ENCODE measurements at regions of chr9 and their contacts with region 1.

Region 1: DNA sequence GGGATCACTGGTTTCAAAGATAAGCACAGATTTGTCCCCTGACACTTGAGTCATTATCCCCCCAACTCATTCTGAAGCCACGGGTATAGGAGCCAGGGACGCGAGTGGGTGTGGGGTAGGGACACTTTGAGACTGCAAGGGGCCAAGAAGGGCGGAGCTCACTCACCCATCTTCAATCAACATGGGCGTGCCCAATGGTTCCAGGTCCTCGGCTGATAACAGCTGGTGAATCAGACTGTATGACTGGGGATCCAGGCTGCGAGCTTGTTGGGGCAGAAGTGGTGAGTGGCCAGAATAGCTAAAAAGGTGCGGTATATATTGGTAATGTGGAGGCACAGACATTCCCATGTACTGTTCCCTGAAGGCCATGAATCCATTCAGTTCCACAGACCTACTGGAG is 30.7 kb upstream of the NR5A1 start:
- DNase-seq: no peak
- H3K4me3 ChIP-seq: no peak overlapping the region
- H3K27ac ChIP-seq: no peak overlapping the region
- H3K4me1 ChIP-seq: no peaks in the 10 kb centered on the region
- H3K27me3 ChIP-seq: no peaks in the 10 kb centered on the region
- CTCF ChIP-seq: no peak
- EP300 ChIP-seq: no peak
- RAD21 ChIP-seq: no peak

Region 2: DNA sequence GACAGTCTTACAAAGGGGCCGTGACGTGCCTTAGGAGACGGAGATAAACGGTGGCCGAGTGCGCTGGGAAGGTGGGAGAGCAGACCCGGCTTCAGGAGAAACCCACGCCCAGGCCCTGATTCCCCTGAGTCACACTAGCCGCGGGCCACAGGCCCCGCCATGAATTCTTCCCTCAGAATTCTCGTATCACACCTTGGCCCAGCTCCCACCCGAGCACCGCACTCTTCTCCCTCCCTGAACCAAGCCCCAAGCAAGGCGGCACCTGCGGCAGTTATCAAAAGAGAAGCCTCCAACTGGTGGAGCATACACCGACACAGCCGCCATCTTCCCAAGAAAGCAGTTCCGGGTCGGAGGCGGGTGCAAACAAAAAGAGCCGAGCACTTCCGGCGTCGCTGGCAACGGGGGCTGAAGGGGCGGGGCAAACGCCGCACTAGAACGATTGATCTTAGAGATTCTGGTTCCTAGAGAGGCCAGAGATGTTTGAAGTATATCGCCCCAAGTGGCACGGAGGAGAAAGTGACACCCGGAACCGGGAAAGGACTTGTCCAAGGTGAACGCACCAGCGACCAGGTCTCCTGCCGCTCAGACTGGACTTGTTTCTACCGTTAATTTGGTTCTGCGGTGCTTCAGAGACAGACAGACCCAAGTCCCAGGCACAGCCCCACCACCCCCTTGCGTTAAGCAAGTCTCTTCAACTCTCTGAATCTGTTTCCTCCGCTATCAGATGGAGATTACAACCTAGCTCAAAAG is 122.6 kb before region 1 on chr9 and contains the start of gene PSMB7:
- CTCF ChIA-PET with region 1: interaction called, 173 read pairs
- POLR2A ChIA-PET with region 1: interaction called, 3 read pairs
- DNase-seq: peak; percentile 92
- H3K4me3 ChIP-seq: peak within 1 kb of the TSS; percentile 94 to 99
- H3K27ac ChIP-seq: peak within 1 kb of the TSS; percentile 56 to 76
- H3K4me1 ChIP-seq: peaks cover 11 to 37% of the 10 kb centered on the region in 2 experiments
- H3K27me3 ChIP-seq: no peaks in the 10 kb centered on the region
- CTCF ChIP-seq: peak; percentile 82
- EP300 ChIP-seq: peak in 1 of 2 experiments; percentile 37; a peak in 1 of 4 replicates
- RAD21 ChIP-seq: no peak
- polyA plus RNA-seq, gene PSMB7: 357 and 484 TPM in 2 replicates

Region 3: GRCh38 chr9:124502711-124503702 is 34.9 kb before region 1 on chr9:
- CTCF ChIA-PET with region 1: interaction called, 13 read pairs
- POLR2A ChIA-PET with region 1: no interaction called
- DNase-seq: peak; percentile 64
- H3K4me3 ChIP-seq: no peak overlapping the region
- H3K27ac ChIP-seq: no peak overlapping the region
- H3K4me1 ChIP-seq: no peaks in the 10 kb centered on the region; a peak in 1 of 4 replicates
- H3K27me3 ChIP-seq: peaks cover 51% of the 10 kb centered on the region
- CTCF ChIP-seq: no peak
- EP300 ChIP-seq: no peak
- RAD21 ChIP-seq: no peak

Region 4: GRCh38 chr9:124527781-124528180 is 10.1 kb before region 1 on chr9:
- CTCF ChIA-PET with region 1: interaction called, 58 read pairs
- POLR2A ChIA-PET with region 1: no interaction called
- DNase-seq: no peak
- H3K4me3 ChIP-seq: no peak overlapping the region
- H3K27ac ChIP-seq: no peak overlapping the region
- H3K4me1 ChIP-seq: peaks cover 0 to 30% of the 10 kb centered on the region in 2 experiments; a peak in 1 of 4 replicates
- H3K27me3 ChIP-seq: no peaks in the 10 kb centered on the region
- CTCF ChIP-seq: no peak
- EP300 ChIP-seq: no peak
- RAD21 ChIP-seq: no peak

Region 5: GRCh38 chr9:124562328-124562727 is 24.4 kb after region 1 on chr9:
- CTCF ChIA-PET with region 1: interaction called, 14 read pairs
- POLR2A ChIA-PET with region 1: no interaction called
- DNase-seq: no peak
- H3K4me3 ChIP-seq: no peak overlapping the region
- H3K27ac ChIP-seq: no peak overlapping the region
- H3K4me1 ChIP-seq: no peaks in the 10 kb centered on the region
- H3K27me3 ChIP-seq: no peaks in the 10 kb centered on the region
- CTCF ChIP-seq: no peak
- EP300 ChIP-seq: no peak
- RAD21 ChIP-seq: no peak

Measured in SK-N-SH (cell line).